Activated CD8-positive, alpha-beta T cell treated with anti-CD3 and anti-CD28 coated beads for 36 hours (primary cell): ENCODE measurements at regions of chr11 and their contacts with region 1.

Region 1: DNA sequence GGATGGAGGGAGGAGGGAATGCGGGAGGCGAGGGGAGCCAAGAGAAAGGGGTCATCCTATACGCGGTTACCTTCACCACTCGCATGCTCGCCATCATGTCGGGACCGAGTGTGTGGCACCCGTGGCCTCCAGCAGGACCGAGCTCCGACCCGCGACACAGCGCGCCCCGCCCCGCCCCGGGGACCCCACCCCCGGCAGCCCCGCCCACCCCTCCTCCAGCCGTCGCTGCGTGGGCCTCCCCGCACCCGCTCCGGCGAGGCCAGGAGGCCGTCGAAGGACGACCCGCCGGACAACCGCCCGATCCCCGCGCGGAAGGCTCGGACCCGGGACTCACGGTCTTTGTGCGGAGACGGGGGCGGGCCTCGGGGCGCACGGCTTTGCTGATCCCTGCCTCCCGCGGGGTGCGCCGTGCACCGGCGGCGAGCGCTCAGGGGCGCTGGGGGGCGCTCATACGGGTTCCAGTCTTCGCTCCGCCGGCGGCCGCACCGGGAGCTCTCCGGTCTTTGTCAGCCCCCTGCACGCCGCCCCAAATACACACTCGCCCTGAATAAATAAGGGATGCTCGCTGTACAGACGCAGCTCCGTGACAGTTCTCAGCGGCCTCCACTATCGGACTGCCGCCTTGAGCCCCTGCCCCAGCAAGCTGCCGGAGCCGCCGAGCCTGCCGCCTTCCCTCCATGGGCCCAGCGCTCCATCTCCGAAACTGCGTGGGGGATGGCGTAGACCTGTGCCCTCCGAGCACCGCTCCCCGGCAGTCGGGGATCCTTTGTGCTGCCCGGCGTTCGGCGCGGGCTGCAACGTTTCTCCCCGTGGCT is at the start of gene UBE2L6:
- DNase-seq: peak; percentile 74
- ATAC-seq: peak; percentile 82
- H3K4me3 Mint-ChIP-seq: peak within 1 kb of the TSS; percentile 89
- H3K27ac Mint-ChIP-seq: peak within 1 kb of the TSS; percentile 98
- H3K4me1 Mint-ChIP-seq: peaks cover 35% of the 10 kb centered on the region
- H3K27me3 Mint-ChIP-seq: no peaks in the 10 kb centered on the region
- CTCF ChIP-seq: no peak
- total RNA-seq, gene UBE2L6: 148 to 159 TPM

Region 2: GRCh38 chr11:57649826-57650738 is 82.4 kb after region 1 on chr11 and contains the start of gene YPEL4:
- CTCF ChIA-PET with region 1: interaction called, 346 read pairs
- POLR2A ChIA-PET with region 1: interaction called, 12 read pairs
- intact Hi-C with region 1: no loop called
- DNase-seq: peak; percentile 78
- ATAC-seq: peak; percentile 80
- H3K4me3 Mint-ChIP-seq: peak within 1 kb of the TSS; percentile 64
- H3K27ac Mint-ChIP-seq: peak within 1 kb of the TSS; percentile 67
- H3K4me1 Mint-ChIP-seq: peaks cover 43% of the 10 kb centered on the region
- H3K27me3 Mint-ChIP-seq: peaks cover 37% of the 10 kb centered on the region
- CTCF ChIP-seq: no peak
- total RNA-seq, gene YPEL4: 0.43 to 0.54 TPM